ENCODE measurements at regions of chr18 and their contacts with region 1.

Region 1: GRCh38 chr18:77042583-77042982 is 90.0 kb downstream of the MBP start:
- DNase-seq: peak in 9 of 10 donors; percentile 74 to 94 (median 84)
- H3K4me3 ChIP-seq: peak overlapping the region in 23 of 59 donors; percentile 0 to 50 (median 24)
- H3K27ac ChIP-seq: peak overlapping the region; percentile 78 to 100 (median 98)
- H3K27me3 ChIP-seq: no peaks in the 10 kb centered on the region
- CTCF ChIP-seq: peak in 10 of 56 donors; percentile 5 to 34 (median 19)

Region 2: DNA sequence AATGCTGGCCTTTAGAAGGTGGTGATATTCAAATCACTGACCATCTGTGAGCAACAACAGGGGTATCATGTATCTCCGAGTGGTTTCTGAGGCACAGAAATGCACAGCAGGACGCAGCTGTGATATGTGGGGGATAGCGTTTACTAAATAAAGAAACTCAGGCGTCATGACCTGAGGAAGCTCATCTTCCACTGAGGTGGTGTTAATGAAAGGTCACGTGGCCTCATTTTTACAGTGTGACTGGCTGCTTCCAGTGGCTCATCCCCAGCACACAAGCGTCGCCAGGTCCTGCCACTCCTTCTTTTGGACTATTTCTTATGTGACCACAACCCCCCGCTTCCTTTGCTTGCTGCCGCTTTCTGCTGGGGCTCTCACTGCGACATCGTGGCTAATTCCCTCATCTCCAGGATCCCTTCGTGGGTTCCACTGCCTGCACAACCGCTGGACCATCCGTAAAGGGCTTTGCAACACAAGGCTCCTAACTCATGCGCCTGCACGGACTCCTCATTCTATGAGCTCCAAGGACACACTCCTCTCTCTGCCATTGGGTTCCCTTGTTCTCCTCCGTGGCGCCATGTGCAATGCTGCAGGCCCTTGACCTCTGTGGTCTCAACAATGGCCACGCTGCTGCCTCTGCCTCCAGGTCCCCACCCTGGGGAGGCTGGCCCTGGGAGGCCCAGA is 19.3 kb before region 1 on chr18:
- intact Hi-C with region 1: loop called in 1 of 2 experiments (anchors 2 kb)
- DNase-seq: peak in 1 of 10 donors; percentile 10
- H3K4me3 ChIP-seq: peak overlapping the region in 28 of 59 donors; percentile 8 to 58 (median 29)
- H3K27ac ChIP-seq: peak overlapping the region; percentile 73 to 100 (median 96)
- H3K27me3 ChIP-seq: no peaks in the 10 kb centered on the region
- CTCF ChIP-seq: no peak